ENCODE measurements at regions of chr11 and their contacts with region 1.

Region 1: DNA sequence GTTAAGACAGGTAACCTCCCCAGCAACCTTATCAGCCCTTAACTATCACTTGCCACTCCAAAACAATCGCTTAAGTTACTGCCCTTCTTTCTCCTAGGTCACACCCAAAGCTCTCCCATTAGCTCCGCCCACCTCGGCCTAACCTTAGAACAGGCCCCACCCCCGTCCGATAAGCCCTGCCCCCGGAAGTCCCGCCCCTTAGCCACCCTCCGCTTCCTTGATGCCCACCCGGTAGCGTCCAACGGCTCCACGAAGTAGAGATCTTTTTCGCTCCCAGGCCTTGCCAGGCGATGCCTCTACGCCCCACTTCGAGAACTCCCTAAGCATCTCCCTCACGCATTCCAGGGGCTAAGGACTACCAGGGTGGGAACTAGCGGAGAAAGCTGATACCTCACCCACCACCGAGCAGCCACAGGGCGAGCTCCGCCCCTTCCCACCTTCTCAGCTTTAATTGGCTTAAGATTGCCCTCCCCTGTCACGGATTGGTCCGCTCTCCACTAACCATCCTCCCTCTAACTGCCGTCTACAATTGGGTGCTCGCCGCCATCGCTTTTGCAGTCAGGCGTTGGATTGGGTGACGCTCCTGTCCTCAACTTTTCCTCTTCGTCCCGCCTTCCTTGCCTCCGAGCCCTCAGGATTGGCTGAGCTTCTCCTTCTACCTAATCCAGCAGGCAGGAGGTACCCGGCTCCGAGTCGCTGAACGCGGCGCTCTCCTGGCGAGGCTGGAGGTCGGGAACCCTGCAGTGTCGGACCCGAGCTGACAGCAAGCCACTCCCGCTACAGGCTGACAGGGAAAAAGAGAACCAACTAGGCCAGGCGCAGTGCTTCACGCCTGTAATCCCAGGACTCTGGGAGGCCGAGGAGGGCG is at the start of gene ZBTB3:
- DNase-seq: peak; percentile 96 to 99 (median 99)
- ATAC-seq: peak; percentile 97 to 98 (median 98)
- H3K4me3 ChIP-seq: peak within 1 kb of the TSS; percentile 21 to 86 (median 71)
- H3K27ac ChIP-seq: peak within 1 kb of the TSS; percentile 85 to 97 (median 94)
- H3K4me1 ChIP-seq: peaks cover 3 to 43% (median 16%) of the 10 kb centered on the region in 12 donors
- H3K27me3 ChIP-seq: no peaks in the 10 kb centered on the region
- CTCF ChIP-seq: peak in 1 of 12 donors; percentile 13
- POLR2A ChIP-seq: peak in 1 of 2 donors; percentile 74
- total RNA-seq, gene ZBTB3: 6.9 to 16.6 (median 9.9) TPM

Region 2: DNA sequence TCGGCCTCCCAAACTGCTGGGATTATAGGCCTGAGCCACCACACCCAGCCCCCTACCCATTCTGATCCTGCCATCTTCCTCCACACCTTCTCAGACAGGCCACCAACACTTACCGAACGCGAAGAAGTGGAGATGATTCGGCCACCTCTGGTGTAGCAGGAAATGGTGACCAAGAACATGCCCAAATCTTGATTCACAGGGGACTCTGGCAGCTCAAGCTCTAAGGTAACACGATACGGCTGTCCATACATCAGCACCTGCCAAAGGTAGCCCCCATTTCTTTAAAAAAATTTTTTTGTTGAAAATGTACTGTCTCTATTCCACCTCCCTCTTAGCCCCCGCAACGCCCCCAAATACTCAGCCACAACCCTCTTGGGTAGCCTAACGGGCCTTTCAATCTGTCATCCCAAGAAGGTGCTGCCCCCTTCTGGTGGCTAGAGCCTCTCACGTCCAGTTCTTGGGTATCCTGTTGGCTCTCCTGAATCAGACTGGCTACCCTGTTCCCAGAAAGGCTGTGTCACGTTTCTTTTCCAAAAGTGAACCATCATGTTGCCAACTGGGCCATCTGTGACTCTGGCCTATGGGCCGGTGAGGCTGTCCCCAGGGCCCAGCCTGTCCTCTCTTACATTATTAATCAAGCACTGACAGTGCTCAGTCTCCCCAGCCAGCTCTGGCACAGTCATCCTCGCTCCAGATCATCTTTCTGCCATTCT is 59.4 kb before region 1 on chr11:
- intact Hi-C with region 1: no loop called
- DNase-seq: peak; percentile 80 to 90 (median 83)
- ATAC-seq: peak; percentile 57 to 85 (median 78)
- H3K4me3 ChIP-seq: no peak overlapping the region
- H3K27ac ChIP-seq: peak overlapping the region in 5 of 12 donors; percentile 13 to 42 (median 34)
- H3K4me1 ChIP-seq: peaks cover 0 to 21% (median 14%) of the 10 kb centered on the region in 12 donors
- H3K27me3 ChIP-seq: no peaks in the 10 kb centered on the region
- CTCF ChIP-seq: peak; percentile 69 to 90 (median 81)
- POLR2A ChIP-seq: no peak

Region 3: DNA sequence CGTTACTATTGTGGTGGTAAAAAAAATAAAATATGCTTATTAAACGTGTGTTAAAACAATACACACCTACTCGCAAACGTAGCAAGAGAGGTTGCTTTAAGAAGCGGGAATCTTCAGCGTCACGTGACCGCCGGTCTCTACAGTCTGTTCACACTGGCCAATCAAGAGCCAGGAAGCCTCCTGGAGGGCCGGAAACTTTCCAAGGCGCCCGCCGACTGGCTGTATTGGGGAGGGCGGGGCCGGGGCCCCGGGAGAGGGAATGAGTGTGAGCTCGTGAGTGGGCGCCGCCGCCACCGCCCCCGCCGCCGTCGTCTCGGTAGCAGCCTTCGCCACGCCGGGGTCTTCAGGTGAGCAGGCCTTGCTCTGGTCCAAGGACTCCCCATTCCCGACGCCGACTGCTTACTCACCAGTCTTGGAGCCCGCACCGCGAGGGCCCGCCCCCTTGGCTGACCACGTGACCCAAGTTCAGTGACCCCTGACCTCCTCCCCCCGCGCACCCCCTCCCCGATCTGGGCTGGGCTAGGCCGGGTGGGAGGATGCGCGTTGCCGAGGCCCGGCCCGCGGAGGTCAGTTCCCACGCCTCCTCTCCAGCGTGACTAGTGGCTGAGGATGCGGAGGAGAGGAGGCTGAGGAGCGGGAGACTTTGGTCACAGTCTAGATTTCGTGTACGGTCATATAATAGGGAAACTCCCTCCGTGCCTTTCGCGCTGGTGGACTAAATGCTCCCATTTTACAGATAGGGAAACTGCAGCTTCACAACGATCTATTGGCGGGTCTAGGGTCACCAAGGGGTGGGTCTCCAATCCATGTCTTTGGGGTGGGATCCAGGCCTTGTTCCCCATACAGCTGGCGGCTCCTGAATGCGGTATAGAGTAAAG is 17.4 kb after region 1 on chr11 and contains the start of gene TAF6L:
- intact Hi-C with region 1: loop called in 1 of 10 experiments (anchors 1 kb)
- DNase-seq: peak; percentile 98 to 100 (median 99)
- ATAC-seq: peak; percentile 94 to 98 (median 98)
- H3K4me3 ChIP-seq: peak within 1 kb of the TSS; percentile 52 to 86 (median 74)
- H3K27ac ChIP-seq: peak within 1 kb of the TSS; percentile 84 to 96 (median 93)
- H3K4me1 ChIP-seq: peaks cover 0 to 27% (median 19%) of the 10 kb centered on the region in 12 donors
- H3K27me3 ChIP-seq: no peaks in the 10 kb centered on the region
- CTCF ChIP-seq: no peak
- POLR2A ChIP-seq: peak in 1 of 2 donors; percentile 27
- total RNA-seq, gene TAF6L: 7.1 to 19.5 (median 9.3) TPM

Measured in heart left ventricle (tissue), 16 donors.